ENCODE measurements at regions of chr16 and their contacts with region 1.

Region 1: DNA sequence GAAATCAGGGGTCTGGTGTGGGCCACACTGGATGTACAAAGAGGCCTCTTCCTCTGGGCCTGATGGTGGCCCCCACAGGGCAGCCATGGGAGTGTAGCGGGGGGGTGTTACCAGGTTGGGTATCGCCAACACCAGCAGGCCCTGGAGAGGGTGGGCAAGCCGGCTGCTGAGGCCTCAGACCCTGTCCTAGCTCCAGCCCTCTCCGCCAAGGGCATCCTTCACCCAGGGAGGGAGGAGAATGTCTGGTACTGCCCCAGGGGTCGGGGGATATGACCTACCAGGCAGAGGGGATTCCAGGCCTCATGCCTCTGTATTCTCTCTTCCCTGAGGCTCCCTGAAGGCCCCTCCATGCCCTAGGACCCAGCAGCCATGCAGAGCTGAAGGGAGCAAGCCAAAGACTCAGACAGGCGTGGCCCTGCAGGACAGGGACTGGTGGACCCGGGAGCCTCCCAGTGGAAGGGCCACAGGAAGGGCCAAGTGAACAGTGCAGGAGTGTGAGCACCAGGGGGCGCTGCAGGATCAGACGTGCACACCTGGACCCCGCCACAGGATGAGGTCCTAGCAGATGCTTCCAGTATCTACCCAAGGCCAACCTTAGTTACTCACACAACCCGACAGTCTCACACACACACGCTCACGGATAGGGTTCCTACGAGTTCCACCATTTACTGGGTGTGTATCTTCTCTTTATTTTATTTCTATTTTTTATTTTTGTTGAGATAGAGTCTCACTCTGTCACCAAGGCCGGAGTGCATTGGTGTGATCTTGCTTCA is 10.9 kb upstream of the CES4A start:
- DNase-seq: peak; percentile 71 to 95 (median 88)
- ATAC-seq: peak; percentile 99
- H3K4me3 ChIP-seq: no peak overlapping the region
- H3K4me3 Mint-ChIP-seq: no peak overlapping the region
- H3K27ac ChIP-seq: no peak overlapping the region
- H3K27ac Mint-ChIP-seq: no peak overlapping the region
- H3K4me1 ChIP-seq: no peaks in the 10 kb centered on the region
- H3K4me1 Mint-ChIP-seq: peaks cover 11% of the 10 kb centered on the region
- H3K27me3 ChIP-seq: no peaks in the 10 kb centered on the region
- H3K27me3 Mint-ChIP-seq: no peaks in the 10 kb centered on the region
- CTCF ChIP-seq: peak; percentile 92

Region 2: DNA sequence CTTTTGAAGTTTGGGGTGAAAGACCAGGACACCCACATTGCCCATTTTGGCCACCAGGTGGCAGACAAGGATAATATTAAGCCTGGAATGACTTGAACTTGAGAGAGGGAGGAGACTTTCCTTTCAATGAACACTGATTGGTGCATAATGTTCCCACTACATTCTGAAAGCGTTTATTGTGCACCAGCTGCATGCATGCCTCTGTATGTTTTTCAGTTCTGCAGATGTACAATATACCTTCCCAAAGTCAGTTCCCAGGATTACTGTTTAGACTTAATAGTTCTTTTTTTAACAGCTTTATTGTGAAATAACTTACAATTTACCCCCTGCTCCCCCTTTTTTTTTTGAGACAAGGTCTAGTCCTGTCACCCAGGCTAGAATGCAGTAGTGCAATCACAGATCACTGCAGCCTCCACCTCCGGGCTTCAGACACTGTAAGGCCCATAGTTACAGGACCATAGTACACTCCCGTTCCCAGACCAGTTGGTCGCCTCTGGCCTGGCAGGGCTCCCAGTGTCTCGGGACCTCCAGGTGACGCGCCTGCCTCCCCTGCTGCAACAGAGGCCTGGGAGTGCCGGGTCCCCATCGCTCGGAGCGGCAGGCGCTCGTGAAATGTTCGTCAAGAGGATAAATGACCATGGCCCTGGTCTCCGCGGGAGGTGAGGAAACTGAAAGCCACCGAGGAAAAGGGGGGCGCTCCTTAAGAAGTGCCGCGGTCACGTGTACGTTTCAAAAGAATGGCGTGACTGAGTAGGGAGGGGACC is 30.0 kb before region 1 on chr16:
- CTCF ChIA-PET with region 1: interaction called, 11 read pairs
- POLR2A ChIA-PET with region 1: no interaction called
- intact Hi-C with region 1: loop called in 1 of 2 experiments (anchors 2 kb)
- DNase-seq: peak; percentile 67 to 90 (median 85)
- ATAC-seq: peak; percentile 94
- H3K4me3 ChIP-seq: peak overlapping the region; percentile 58 to 65
- H3K4me3 Mint-ChIP-seq: peak overlapping the region; percentile 89
- H3K27ac ChIP-seq: no peak overlapping the region
- H3K27ac Mint-ChIP-seq: no peak overlapping the region
- H3K4me1 ChIP-seq: peaks cover 17% of the 10 kb centered on the region
- H3K4me1 Mint-ChIP-seq: peaks cover 19% of the 10 kb centered on the region
- H3K27me3 ChIP-seq: peaks cover 0 to 19% of the 10 kb centered on the region in 2 experiments
- H3K27me3 Mint-ChIP-seq: peaks cover 22% of the 10 kb centered on the region
- CTCF ChIP-seq: peak; percentile 89

Region 3: GRCh38 chr16:66964049-66964448 is 13.5 kb before region 1 on chr16:
- CTCF ChIA-PET with region 1: interaction called, 17 read pairs
- POLR2A ChIA-PET with region 1: no interaction called
- intact Hi-C with region 1: no loop called
- DNase-seq: no peak
- ATAC-seq: no peak
- H3K4me3 ChIP-seq: no peak overlapping the region
- H3K4me3 Mint-ChIP-seq: no peak overlapping the region
- H3K27ac ChIP-seq: no peak overlapping the region
- H3K27ac Mint-ChIP-seq: no peak overlapping the region
- H3K4me1 ChIP-seq: no peaks in the 10 kb centered on the region
- H3K4me1 Mint-ChIP-seq: no peaks in the 10 kb centered on the region
- H3K27me3 ChIP-seq: no peaks in the 10 kb centered on the region
- H3K27me3 Mint-ChIP-seq: peaks cover 3% of the 10 kb centered on the region
- CTCF ChIP-seq: no peak

Region 4: GRCh38 chr16:67399181-67399733 is 421.7 kb after region 1 on chr16:
- CTCF ChIA-PET with region 1: interaction called, 3 read pairs
- POLR2A ChIA-PET with region 1: no interaction called
- intact Hi-C with region 1: loop called in 1 of 2 experiments (anchors 5 kb)
- DNase-seq: peak in 6 of 9 experiments; percentile 11 to 66 (median 51)
- ATAC-seq: peak; percentile 81
- H3K4me3 ChIP-seq: no peak overlapping the region
- H3K4me3 Mint-ChIP-seq: no peak overlapping the region
- H3K27ac ChIP-seq: no peak overlapping the region
- H3K27ac Mint-ChIP-seq: no peak overlapping the region
- H3K4me1 ChIP-seq: peaks cover 7% of the 10 kb centered on the region
- H3K4me1 Mint-ChIP-seq: peaks cover 5% of the 10 kb centered on the region
- H3K27me3 ChIP-seq: peaks cover 6 to 11% of the 10 kb centered on the region in 2 experiments
- H3K27me3 Mint-ChIP-seq: peaks cover 13% of the 10 kb centered on the region
- CTCF ChIP-seq: peak; percentile 67

Region 5: DNA sequence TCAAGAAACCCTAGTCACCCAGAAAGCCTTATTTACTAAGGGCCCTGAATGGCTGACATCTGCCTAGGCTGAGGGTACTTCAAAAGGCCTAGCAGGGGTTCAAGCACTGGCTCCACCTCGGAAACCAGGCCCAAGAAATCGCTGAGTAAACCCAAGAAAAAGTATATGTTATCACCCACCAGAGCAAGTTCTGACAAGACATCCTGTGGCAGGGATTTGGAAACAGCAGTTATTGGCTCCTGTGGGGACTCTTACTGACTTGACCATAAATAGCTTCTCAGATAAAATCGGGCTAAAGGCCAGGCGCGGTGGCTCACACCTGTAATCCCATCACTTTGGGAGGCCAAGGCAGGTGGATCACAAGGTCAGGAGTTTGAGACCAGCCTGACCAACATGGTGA is 491.2 kb after region 1 on chr16:
- CTCF ChIA-PET with region 1: no interaction called
- POLR2A ChIA-PET with region 1: no interaction called
- intact Hi-C with region 1: loop called (anchors 2 to 5 kb)
- DNase-seq: no peak
- ATAC-seq: no peak
- H3K4me3 ChIP-seq: no peak overlapping the region
- H3K4me3 Mint-ChIP-seq: no peak overlapping the region
- H3K27ac ChIP-seq: no peak overlapping the region
- H3K27ac Mint-ChIP-seq: no peak overlapping the region
- H3K4me1 ChIP-seq: no peaks in the 10 kb centered on the region
- H3K4me1 Mint-ChIP-seq: peaks cover 53% of the 10 kb centered on the region
- H3K27me3 ChIP-seq: no peaks in the 10 kb centered on the region
- H3K27me3 Mint-ChIP-seq: no peaks in the 10 kb centered on the region
- CTCF ChIP-seq: no peak

Measured in CD8-positive, alpha-beta T cell (primary cell).